Left cardiac atrium (tissue), 4 donors: ENCODE measurements at regions of chr22 and their contacts with region 1.

Region 1: DNA sequence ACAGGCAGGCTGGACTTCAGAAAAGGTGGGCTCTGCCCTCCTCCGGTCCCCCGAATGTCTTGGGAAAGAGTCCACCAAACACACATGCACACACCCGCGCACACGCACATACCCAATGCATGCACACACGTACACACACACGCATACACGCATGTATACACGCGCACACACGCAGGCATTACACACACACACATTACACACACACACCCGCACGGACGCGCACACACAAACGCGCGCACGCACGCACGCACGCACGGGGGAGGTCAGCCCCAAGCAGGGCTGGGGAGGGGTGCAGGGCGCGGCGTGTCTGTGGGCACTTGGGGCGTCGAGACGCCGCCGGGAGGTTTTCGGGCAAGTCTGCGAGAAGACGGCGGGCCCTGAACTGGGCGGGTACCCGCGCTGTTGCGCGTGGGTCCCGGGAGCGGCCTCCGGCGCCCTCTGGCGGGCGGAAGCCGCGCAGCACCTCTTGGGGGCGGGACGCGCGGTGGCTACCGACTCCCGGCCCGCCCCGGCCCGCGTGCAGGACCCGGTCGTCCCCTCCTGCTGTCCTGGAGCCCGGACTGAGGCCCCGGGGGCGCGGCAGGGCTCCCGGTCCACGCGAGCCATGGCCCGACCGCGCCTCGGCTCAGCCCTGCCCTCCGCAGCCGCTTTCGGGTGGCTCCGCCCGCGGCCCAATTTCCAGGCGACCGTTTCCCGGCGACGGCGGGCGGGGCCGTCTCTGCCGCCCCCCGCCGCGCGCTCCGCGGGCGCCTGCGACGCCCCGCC is 3.6 kb downstream of the SEPTIN5 start:
- DNase-seq: peak; percentile 78
- ATAC-seq: peak; percentile 69 to 74

Region 2: GRCh38 chr22:19679522-19680101 is 38.3 kb before region 1 on chr22:
- intact Hi-C with region 1: loop called in 1 of 2 experiments (anchors 1 kb)
- DNase-seq: peak; percentile 71
- ATAC-seq: peak; percentile 81 to 82